Heart right ventricle (tissue), 16 donors: ENCODE measurements at regions of chr18 and their contacts with region 1.

Region 1: DNA sequence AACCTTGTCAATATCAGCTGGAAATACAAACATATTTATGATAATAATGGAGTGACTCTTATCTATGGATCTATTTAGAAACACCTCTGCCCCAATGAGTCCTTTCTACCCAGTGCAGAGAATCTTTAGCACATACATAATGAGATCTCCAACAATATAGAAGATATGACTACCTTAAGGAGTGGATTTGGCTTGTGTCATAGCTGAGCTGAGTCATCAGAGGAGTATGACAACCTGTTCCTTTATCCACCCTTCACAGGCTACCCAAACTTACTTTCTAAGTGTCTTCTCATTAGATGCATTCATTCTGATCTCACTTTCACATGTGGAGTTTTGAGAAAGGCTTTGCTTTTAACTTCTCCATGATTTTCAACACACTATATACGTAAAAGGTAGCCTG is 1218.9 kb downstream of the DSC3 start:
- DNase-seq: no peak
- ATAC-seq: no peak
- H3K4me3 ChIP-seq: no peak overlapping the region
- H3K27ac ChIP-seq: no peak overlapping the region
- H3K4me1 ChIP-seq: no peaks in the 10 kb centered on the region
- H3K27me3 ChIP-seq: no peaks in the 10 kb centered on the region
- CTCF ChIP-seq: no peak

Region 2: DNA sequence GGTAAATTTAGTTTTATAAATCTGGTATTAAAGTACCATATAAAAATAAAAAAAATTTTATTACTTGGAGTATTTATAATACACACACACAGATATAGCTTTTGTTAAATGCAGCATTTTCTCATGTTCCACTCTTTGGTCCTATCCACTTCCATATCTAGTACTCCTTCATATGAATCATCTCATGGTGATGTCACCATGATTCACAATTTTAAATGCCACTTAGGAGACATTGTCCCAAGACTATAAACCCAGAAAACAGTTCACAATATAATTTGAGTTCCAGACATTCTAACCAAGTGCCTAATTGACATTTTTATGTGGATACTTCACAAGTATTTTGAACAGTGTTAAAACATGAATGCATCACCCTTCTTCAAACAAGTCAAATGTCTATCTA is 179.4 kb before region 1 on chr18:
- intact Hi-C with region 1: no loop called
- DNase-seq: no peak
- ATAC-seq: no peak
- H3K4me3 ChIP-seq: no peak overlapping the region
- H3K27ac ChIP-seq: no peak overlapping the region
- H3K4me1 ChIP-seq: no peaks in the 10 kb centered on the region
- H3K27me3 ChIP-seq: no peaks in the 10 kb centered on the region
- CTCF ChIP-seq: no peak

Region 3: DNA sequence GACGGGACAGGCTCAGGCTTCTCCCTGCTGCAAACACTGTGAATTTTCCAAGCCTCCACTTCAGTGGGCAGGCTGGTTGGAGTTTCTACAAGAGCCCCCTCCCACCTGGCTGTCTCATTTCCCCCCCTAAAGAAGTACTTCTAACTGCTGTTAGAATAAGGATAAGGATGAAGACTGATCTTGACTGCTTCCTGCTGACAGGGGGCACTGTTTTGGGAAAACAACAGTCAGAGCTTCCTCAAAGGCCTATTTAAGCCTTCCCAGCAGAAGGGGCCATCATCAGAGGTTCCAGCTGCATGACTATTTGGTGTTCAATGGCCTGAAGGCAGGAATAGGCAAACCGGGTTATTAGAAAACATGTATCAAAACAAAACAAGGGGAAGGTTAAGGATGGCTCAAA is 56.1 kb after region 1 on chr18:
- intact Hi-C with region 1: loop called in 2 of 10 experiments (anchors 10 kb)
- DNase-seq: no peak
- ATAC-seq: no peak
- H3K4me3 ChIP-seq: no peak overlapping the region
- H3K27ac ChIP-seq: no peak overlapping the region
- H3K4me1 ChIP-seq: no peaks in the 10 kb centered on the region
- H3K27me3 ChIP-seq: no peaks in the 10 kb centered on the region
- CTCF ChIP-seq: no peak

Region 4: GRCh38 chr18:31760695-31761094 is 1937.0 kb after region 1 on chr18 and contains the start of gene SLC25A52:
- intact Hi-C with region 1: loop called in 1 of 10 experiments (anchors 10 kb)
- DNase-seq: peak in 1 of 2 donors; percentile 21
- ATAC-seq: no peak
- H3K4me3 ChIP-seq: no peak within 1 kb of the TSS
- H3K27ac ChIP-seq: no peak within 1 kb of the TSS
- H3K4me1 ChIP-seq: no peaks in the 10 kb centered on the region
- H3K27me3 ChIP-seq: no peaks in the 10 kb centered on the region
- CTCF ChIP-seq: no peak
- total RNA-seq, gene SLC25A52: 0.21 TPM in 2 of 10 donors, not detected in the others